BJ (cell line): ENCODE measurements at regions of chr2 and their contacts with region 1.

Region 1: GRCh38 chr2:11688222-11689069 is 18.5 kb upstream of the NTSR2 start:
- DNase-seq: no peak
- H3K4me3 ChIP-seq: peak overlapping the region; percentile 25
- H3K27me3 ChIP-seq: peaks cover 13% of the 10 kb centered on the region
- CTCF ChIP-seq: peak; percentile 86

Region 2: GRCh38 chr2:11676640-11677039 is 11.8 kb before region 1 on chr2:
- CTCF ChIA-PET with region 1: interaction called, 41 read pairs
- POLR2A ChIA-PET with region 1: no interaction called
- DNase-seq: no peak
- H3K4me3 ChIP-seq: no peak overlapping the region
- H3K27me3 ChIP-seq: peaks cover 10% of the 10 kb centered on the region
- CTCF ChIP-seq: no peak

Region 3: GRCh38 chr2:11710234-11710975 is 22.0 kb after region 1 on chr2:
- CTCF ChIA-PET with region 1: interaction called, 16 read pairs
- POLR2A ChIA-PET with region 1: no interaction called
- DNase-seq: no peak
- H3K4me3 ChIP-seq: no peak overlapping the region
- H3K27me3 ChIP-seq: no peaks in the 10 kb centered on the region
- CTCF ChIP-seq: no peak

Region 4: GRCh38 chr2:11738589-11739436 is 50.4 kb after region 1 on chr2:
- CTCF ChIA-PET with region 1: interaction called, 28 read pairs
- POLR2A ChIA-PET with region 1: no interaction called
- DNase-seq: peak; percentile 62
- H3K4me3 ChIP-seq: no peak overlapping the region
- H3K27me3 ChIP-seq: no peaks in the 10 kb centered on the region; the same call in 1 of the 2 replicates
- CTCF ChIP-seq: peak; percentile 67

Region 5: DNA sequence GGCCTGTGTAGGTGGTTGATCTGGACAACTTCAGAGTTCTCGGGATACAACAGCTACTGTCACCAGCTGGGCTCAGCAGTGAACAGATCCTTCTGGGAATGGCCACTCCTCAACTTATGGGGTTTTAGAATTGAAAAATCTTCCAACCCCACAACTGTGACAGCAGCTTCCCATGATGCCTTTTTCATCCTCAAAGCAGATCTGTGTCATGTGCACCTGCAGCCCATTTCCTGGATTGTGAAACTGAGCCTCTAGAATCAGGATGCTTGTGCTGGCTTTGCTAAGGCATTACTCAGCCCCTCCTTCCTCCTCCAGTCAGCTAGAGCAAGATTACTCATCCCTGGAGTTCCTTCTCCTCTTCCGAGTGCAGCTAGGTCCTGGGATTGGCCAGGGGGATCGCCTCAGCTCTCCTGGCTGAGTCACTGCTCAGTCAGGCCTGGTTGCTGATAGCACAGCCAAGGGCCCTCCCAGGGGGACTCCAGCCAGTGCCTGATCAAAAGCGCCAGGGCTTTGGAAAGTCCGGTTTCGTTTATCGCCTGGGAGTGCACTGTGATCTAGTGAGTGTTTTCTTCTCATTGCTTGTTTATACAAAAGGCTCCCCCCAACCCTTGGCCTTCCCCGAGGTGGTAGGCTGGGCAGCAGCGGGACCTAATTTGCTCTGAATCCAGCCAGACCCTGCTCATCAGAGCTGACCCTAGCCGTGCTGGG is 55.6 kb after region 1 on chr2:
- CTCF ChIA-PET with region 1: interaction called, 28 read pairs
- POLR2A ChIA-PET with region 1: interaction called, 9 read pairs
- DNase-seq: peak; percentile 97
- H3K4me3 ChIP-seq: 0 out of 2 replicates have a peak overlapping the region, but pooled peaks have one; percentile 15
- H3K27me3 ChIP-seq: no peaks in the 10 kb centered on the region
- CTCF ChIP-seq: no peak

Region 6: GRCh38 chr2:11778923-11779757 is 90.7 kb after region 1 on chr2:
- CTCF ChIA-PET with region 1: interaction called, 423 read pairs
- POLR2A ChIA-PET with region 1: no interaction called
- DNase-seq: no peak
- H3K4me3 ChIP-seq: no peak overlapping the region
- H3K27me3 ChIP-seq: no peaks in the 10 kb centered on the region
- CTCF ChIP-seq: peak; percentile 98

Region 7: GRCh38 chr2:11945139-11946126 is 257.0 kb after region 1 on chr2:
- CTCF ChIA-PET with region 1: no interaction called
- POLR2A ChIA-PET with region 1: no interaction called
- DNase-seq: no peak
- H3K4me3 ChIP-seq: no peak overlapping the region
- H3K27me3 ChIP-seq: no peaks in the 10 kb centered on the region; the same call in 1 of the 2 replicates
- CTCF ChIP-seq: no peak